Dorsolateral prefrontal cortex (tissue), 120 donors: ENCODE measurements at regions of chr22 and their contacts with region 1.

Region 1: GRCh38 chr22:36470162-36470993 is 11.1 kb downstream of the TXN2 start:
- DNase-seq: peak; percentile 67 to 88 (median 85)
- H3K4me3 ChIP-seq: no peak overlapping the region
- H3K27ac ChIP-seq: peak overlapping the region in 42 of 59 donors; percentile 0 to 83 (median 56)
- H3K27me3 ChIP-seq: no peaks in the 10 kb centered on the region
- CTCF ChIP-seq: peak; percentile 58 to 98 (median 95)

Region 2: DNA sequence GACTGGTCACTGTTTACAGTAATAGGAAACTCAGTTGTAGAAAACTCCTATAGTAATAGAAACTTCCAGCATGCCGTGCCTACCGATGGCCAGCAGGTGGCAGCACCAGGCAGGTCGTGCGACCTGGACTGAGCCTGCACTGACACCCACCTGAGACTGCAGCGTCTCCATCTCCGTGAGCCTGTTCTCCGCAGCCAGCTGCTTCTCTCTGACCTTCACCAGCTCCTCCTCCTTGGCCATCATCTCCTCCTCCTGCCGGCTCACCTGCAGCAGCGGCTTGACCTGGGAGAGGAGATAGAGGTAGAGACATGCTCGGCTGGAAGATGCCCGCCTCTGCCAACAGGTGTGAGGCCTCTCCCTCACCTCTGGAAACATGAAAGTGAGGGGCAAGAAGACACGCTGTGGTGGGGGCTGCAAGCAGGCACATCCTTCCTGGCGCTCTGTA is 169.0 kb before region 1 on chr22:
- intact Hi-C with region 1: loop called (anchors 1 to 2 kb)
- DNase-seq: peak; percentile 68 to 84 (median 78)
- H3K4me3 ChIP-seq: no peak overlapping the region
- H3K27ac ChIP-seq: peak overlapping the region in 17 of 59 donors; percentile 4 to 54 (median 31)
- H3K27me3 ChIP-seq: no peaks in the 10 kb centered on the region
- CTCF ChIP-seq: peak; percentile 89 to 100 (median 98)

Region 3: GRCh38 chr22:36520423-36520822 is 50.0 kb after region 1 on chr22:
- intact Hi-C with region 1: no loop called
- DNase-seq: no peak
- H3K4me3 ChIP-seq: no peak overlapping the region
- H3K27ac ChIP-seq: no peak overlapping the region
- H3K27me3 ChIP-seq: no peaks in the 10 kb centered on the region
- CTCF ChIP-seq: no peak